CD8-positive, alpha-beta T cell (primary cell): ENCODE measurements at regions of chrX and their contacts with region 1.

Region 1: DNA sequence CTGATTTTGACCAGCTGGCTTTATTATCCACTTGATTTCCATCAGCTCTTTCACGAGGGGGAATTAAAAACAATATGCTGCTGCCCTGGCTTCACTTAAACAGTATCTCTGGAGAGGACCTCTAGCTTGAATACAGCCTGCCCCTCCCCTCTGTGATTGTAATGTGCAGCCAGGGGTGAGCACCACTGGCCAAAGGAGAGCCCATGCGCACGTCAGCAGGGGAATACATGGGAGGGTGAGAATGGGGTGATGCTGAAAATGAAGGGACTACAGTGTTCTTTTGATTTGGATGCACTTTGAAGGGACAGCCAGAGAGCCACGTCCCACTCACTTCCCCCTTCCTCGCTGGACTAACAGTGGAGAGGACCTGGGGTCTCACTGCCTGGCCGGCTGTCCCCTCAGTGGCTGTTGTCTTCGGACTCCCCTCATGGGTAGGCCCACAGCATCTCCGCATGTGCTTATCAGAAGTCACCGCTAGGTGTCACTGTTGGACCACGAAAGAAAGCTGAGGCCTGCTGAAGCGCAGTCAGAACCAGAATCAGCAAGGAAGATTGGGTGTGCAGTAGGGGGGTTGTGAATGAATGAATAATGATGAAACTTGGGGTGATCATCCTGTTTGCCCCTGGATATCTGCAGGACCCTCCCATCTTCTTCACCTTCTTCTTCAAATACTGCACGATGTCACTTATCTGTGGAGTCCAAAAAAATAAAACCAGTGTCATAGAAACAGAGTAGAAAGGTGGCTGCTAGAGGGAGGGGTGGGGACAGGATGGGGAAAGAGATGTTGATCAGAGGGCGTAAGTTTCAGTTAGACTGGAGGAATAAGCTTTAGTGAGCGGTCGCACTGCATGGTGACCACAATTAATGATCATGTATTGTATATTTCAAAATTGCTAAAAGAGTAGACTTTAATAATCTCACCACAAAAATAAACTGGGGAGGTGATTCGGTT is 32.8 kb downstream of the CLCN4 start:
- DNase-seq: peak; percentile 34 to 87 (median 69)
- ATAC-seq: peak; percentile 46
- H3K4me3 ChIP-seq: no peak overlapping the region
- H3K4me3 Mint-ChIP-seq: no peak overlapping the region
- H3K27ac ChIP-seq: no peak overlapping the region
- H3K27ac Mint-ChIP-seq: no peak overlapping the region
- H3K4me1 ChIP-seq: no peaks in the 10 kb centered on the region
- H3K4me1 Mint-ChIP-seq: no peaks in the 10 kb centered on the region
- H3K27me3 ChIP-seq: no peaks in the 10 kb centered on the region
- H3K27me3 Mint-ChIP-seq: peaks cover 2% of the 10 kb centered on the region
- CTCF ChIP-seq: peak; percentile 65

Region 2: GRCh38 chrX:9525511-9526248 is 663.9 kb before region 1 on chrX:
- CTCF ChIA-PET with region 1: no interaction called
- POLR2A ChIA-PET with region 1: no interaction called
- intact Hi-C with region 1: no loop called
- DNase-seq: peak in 2 of 9 experiments; percentile 27 to 40
- ATAC-seq: no peak
- H3K4me3 ChIP-seq: no peak overlapping the region
- H3K4me3 Mint-ChIP-seq: peak overlapping the region; percentile 44
- H3K27ac ChIP-seq: no peak overlapping the region
- H3K27ac Mint-ChIP-seq: peak overlapping the region; percentile 61
- H3K4me1 ChIP-seq: peaks cover 1% of the 10 kb centered on the region
- H3K4me1 Mint-ChIP-seq: peaks cover 43% of the 10 kb centered on the region
- H3K27me3 ChIP-seq: no peaks in the 10 kb centered on the region
- H3K27me3 Mint-ChIP-seq: no peaks in the 10 kb centered on the region
- CTCF ChIP-seq: no peak

Region 3: GRCh38 chrX:10722851-10723250 is 533.3 kb after region 1 on chrX:
- CTCF ChIA-PET with region 1: interaction called, 23 read pairs
- POLR2A ChIA-PET with region 1: no interaction called
- intact Hi-C with region 1: loop called in 1 of 2 experiments (anchors 1 kb)
- DNase-seq: peak in 5 of 9 experiments; percentile 0 to 32 (median 18)
- ATAC-seq: no peak
- H3K4me3 ChIP-seq: no peak overlapping the region
- H3K4me3 Mint-ChIP-seq: no peak overlapping the region
- H3K27ac ChIP-seq: no peak overlapping the region
- H3K27ac Mint-ChIP-seq: no peak overlapping the region
- H3K4me1 ChIP-seq: no peaks in the 10 kb centered on the region
- H3K4me1 Mint-ChIP-seq: no peaks in the 10 kb centered on the region
- H3K27me3 ChIP-seq: no peaks in the 10 kb centered on the region
- H3K27me3 Mint-ChIP-seq: no peaks in the 10 kb centered on the region
- CTCF ChIP-seq: peak; percentile 38

Region 4: GRCh38 chrX:10769195-10769594 is 579.6 kb after region 1 on chrX:
- CTCF ChIA-PET with region 1: interaction called, 3 read pairs
- POLR2A ChIA-PET with region 1: no interaction called
- intact Hi-C with region 1: loop called in 1 of 2 experiments (anchors 1 kb)
- DNase-seq: peak in 2 of 9 experiments; percentile 0 to 7
- ATAC-seq: no peak
- H3K4me3 ChIP-seq: no peak overlapping the region
- H3K4me3 Mint-ChIP-seq: no peak overlapping the region
- H3K27ac ChIP-seq: no peak overlapping the region
- H3K27ac Mint-ChIP-seq: no peak overlapping the region
- H3K4me1 ChIP-seq: no peaks in the 10 kb centered on the region
- H3K4me1 Mint-ChIP-seq: no peaks in the 10 kb centered on the region
- H3K27me3 ChIP-seq: no peaks in the 10 kb centered on the region
- H3K27me3 Mint-ChIP-seq: no peaks in the 10 kb centered on the region
- CTCF ChIP-seq: no peak